Natural killer cell (primary cell): ENCODE measurements at regions of chr9 and their contacts with region 1.

Region 1: GRCh38 chr9:89602978-89603766 is 1.6 kb upstream of the GADD45G start:
- DNase-seq: peak; percentile 73 to 92
- ATAC-seq: peak in 1 of 3 donors; percentile 26
- H3K4me3 ChIP-seq: peak overlapping the region; percentile 9
- H3K4me3 Mint-ChIP-seq: peak overlapping the region; percentile 67
- H3K27ac ChIP-seq: no peak overlapping the region
- H3K27ac Mint-ChIP-seq: peak overlapping the region in 1 of 2 donors; percentile 18
- H3K4me1 ChIP-seq: peaks cover 42% of the 10 kb centered on the region
- H3K4me1 Mint-ChIP-seq: peaks cover 6 to 32% of the 10 kb centered on the region in 2 donors
- H3K27me3 ChIP-seq: peaks cover 16% of the 10 kb centered on the region
- H3K27me3 Mint-ChIP-seq: peaks cover 24 to 36% of the 10 kb centered on the region in 2 donors
- CTCF ChIP-seq: peak; percentile 65

Region 2: GRCh38 chr9:89923961-89924504 is 320.9 kb after region 1 on chr9:
- intact Hi-C with region 1: loop called (anchors 5 kb)
- DNase-seq: peak in 1 of 2 donors; percentile 51
- ATAC-seq: no peak
- H3K4me3 ChIP-seq: no peak overlapping the region
- H3K4me3 Mint-ChIP-seq: no peak overlapping the region
- H3K27ac ChIP-seq: no peak overlapping the region
- H3K27ac Mint-ChIP-seq: no peak overlapping the region
- H3K4me1 ChIP-seq: peaks cover 6% of the 10 kb centered on the region
- H3K4me1 Mint-ChIP-seq: peaks cover 0 to 7% of the 10 kb centered on the region in 2 donors
- H3K27me3 ChIP-seq: no peaks in the 10 kb centered on the region
- H3K27me3 Mint-ChIP-seq: peaks cover 30 to 36% of the 10 kb centered on the region in 2 donors
- CTCF ChIP-seq: no peak

Region 3: DNA sequence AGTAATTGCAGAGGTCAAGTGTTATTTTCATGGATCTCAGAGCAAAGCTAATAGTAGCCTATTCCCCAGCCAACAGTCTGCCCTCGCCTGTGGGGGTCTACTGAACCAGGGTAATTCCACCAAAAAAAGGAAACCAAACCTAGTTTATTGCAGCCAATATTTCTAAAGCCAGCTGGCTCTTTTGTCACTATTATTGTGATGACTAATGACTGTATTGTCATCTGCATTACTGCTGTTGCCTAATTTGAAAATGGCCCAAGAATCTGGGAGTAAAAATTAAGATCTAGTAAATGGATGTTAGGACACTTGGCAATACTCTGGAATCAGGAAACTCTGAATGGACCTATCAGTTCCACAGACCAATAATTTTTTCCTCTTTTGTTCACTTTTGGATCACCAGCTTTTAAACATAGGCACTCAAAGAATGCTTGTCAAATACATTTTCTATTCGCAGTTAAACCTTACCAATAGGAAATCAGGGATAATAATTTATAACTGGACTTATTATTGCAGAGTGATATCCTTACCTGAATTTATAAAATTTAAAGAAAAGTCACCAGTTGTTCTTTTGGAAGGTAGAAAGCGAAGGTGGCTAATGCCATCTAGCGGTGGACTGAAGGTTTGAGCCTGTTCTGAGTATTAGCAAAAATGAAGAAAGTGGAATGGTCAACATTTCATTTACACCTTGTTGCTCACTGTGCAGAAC is 1267.6 kb after region 1 on chr9:
- intact Hi-C with region 1: loop called (anchors 10 kb)
- DNase-seq: peak in 1 of 2 donors; percentile 73
- ATAC-seq: peak in 2 of 3 donors; percentile 61 to 63
- H3K4me3 ChIP-seq: no peak overlapping the region
- H3K4me3 Mint-ChIP-seq: no peak overlapping the region
- H3K27ac ChIP-seq: no peak overlapping the region
- H3K27ac Mint-ChIP-seq: no peak overlapping the region
- H3K4me1 ChIP-seq: no peaks in the 10 kb centered on the region
- H3K4me1 Mint-ChIP-seq: peaks cover 0 to 11% of the 10 kb centered on the region in 2 donors
- H3K27me3 ChIP-seq: no peaks in the 10 kb centered on the region
- H3K27me3 Mint-ChIP-seq: no peaks in the 10 kb centered on the region
- CTCF ChIP-seq: peak; percentile 97